ENCODE measurements at regions of chr9 and their contacts with region 1.

Region 1: DNA sequence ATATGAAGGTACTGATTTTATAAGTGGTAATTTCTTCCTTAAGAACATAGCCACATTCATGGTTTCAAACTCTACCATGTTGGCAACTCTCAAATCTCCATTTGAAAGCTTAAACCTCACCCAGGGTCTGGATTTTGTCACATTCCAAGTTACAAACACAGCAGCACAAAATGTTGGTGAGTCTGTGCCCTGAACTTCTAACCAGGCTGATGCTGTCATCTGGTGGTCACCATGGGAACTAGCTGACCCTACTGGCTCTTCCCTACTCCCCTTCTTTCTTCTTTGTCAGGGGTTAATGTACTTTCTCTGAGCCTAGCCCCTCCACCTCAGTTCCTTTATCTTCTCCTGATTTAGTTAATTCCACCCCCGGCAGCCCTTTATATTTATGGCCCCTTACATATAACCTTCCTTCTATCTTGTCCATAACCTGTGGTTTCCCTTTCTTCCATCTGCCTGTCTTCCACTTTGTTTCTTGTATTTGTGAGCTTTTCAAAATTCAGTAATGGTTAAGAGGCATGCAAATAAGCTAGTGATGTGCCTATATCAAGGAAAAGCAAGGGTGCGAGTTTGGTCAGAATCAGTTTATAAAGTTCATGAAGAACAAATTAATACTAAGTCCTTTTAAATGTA is 35.9 kb downstream of the TGFBR1 start:
- DNase-seq: peak; percentile 56
- ATAC-seq: peak; percentile 65
- H3K4me3 Mint-ChIP-seq: no peak overlapping the region
- H3K27ac Mint-ChIP-seq: peak overlapping the region; percentile 66
- H3K4me1 Mint-ChIP-seq: peaks cover 50% of the 10 kb centered on the region
- H3K27me3 Mint-ChIP-seq: no peaks in the 10 kb centered on the region

Region 2: DNA sequence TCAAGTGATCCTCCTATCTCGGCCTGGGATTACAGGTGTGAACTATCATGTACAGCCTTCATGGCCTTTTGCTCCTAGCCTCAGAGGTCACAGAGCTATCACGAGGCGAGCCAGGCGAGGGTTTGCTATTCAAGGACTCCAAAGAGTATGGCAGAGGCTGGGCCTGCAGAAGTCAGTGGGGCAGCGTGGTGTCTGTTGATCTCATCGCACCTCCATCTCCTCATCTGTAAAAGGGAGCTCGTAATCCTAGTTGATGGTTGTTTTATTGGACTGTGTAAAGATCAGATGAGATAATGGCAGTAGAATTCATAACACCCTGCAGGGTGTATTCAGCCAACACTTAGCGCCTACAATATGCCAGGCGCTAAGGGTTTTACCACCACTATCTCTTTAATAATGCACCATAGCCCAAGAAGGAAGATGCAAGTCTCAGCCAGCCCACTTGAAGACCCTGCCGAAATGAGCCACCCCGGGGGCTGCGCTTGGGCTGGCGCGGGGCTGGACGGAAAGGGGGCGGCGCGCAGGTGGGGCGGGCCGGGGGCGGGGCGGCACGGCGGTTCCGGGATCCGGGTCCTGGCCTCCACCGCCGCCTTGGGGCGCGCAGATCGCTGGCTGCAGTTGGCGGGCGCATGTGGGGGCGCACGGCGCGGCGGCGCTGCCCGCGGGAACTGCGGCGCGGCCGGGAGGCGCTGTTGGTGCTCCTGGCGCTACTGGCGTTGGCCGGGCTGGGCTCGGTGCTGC is 333.6 kb before region 1 on chr9 and contains the start of gene GALNT12:
- CTCF ChIA-PET with region 1: interaction called, 18 read pairs
- POLR2A ChIA-PET with region 1: no interaction called
- DNase-seq: peak; percentile 64
- ATAC-seq: peak; percentile 83
- H3K4me3 Mint-ChIP-seq: peak within 1 kb of the TSS; percentile 82
- H3K27ac Mint-ChIP-seq: peak within 1 kb of the TSS; percentile 9
- H3K4me1 Mint-ChIP-seq: peaks cover 35% of the 10 kb centered on the region
- H3K27me3 Mint-ChIP-seq: peaks cover 28% of the 10 kb centered on the region
- total RNA-seq, gene GALNT12: 7.9 to 8.8 TPM

Region 3: DNA sequence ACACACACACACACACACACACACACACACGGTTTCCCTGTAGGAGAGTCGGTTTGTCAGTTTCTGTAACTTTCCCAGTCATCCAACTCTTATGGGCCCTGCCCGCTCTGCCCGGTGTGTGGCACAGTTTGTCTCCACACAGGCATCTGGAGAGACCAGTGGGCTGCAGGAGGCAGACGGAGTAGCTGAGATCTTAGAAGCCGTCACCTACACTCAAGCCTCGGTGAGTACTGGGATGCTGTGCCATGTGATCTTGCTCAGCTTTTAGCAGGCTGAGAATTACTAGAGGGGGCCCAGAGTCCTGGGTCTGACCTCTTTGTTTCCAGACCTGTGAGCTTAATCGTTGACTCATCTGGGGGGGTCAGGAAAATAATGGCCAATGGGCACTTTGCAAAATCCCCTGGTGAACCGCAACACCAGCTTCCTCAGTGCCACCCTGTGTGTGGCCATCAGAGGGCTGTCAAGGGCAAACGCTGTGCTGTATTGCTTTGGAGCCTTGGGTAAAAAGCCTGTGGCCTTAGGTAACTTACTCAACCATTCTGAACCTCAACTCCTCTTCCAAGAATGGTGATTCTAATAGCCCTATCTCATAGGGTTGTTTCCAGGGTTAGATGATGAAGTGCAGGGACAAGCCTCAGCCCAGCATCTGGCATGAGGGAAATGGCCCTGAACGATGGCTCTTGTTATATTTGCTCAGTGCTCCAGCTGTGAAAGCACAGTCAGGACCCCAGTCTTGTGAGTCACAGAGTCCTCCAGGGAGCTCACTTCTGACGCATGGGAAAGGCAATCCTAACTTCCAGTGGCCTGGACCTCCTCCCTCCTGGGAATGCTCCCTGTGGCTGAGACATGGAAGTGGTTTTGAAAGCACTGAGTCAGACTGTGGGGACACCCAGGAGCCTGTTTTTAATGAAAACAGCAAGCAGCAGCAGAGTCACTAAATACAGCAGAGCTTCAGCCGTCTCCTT is 151.5 kb before region 1 on chr9:
- CTCF ChIA-PET with region 1: interaction called, 246 read pairs
- POLR2A ChIA-PET with region 1: interaction called, 3 read pairs
- DNase-seq: no peak
- ATAC-seq: no peak
- H3K4me3 Mint-ChIP-seq: no peak overlapping the region
- H3K27ac Mint-ChIP-seq: no peak overlapping the region
- H3K4me1 Mint-ChIP-seq: no peaks in the 10 kb centered on the region
- H3K27me3 Mint-ChIP-seq: no peaks in the 10 kb centered on the region

Region 4: GRCh38 chr9:99026338-99027298 is 114.2 kb before region 1 on chr9:
- CTCF ChIA-PET with region 1: interaction called, 13 read pairs
- POLR2A ChIA-PET with region 1: no interaction called
- DNase-seq: no peak
- ATAC-seq: no peak
- H3K4me3 Mint-ChIP-seq: no peak overlapping the region
- H3K27ac Mint-ChIP-seq: peak overlapping the region; percentile 5
- H3K4me1 Mint-ChIP-seq: peaks cover 45% of the 10 kb centered on the region
- H3K27me3 Mint-ChIP-seq: peaks cover 2% of the 10 kb centered on the region

Region 5: GRCh38 chr9:99104459-99105151 is 36.2 kb before region 1 on chr9 and contains the start of gene TGFBR1:
- CTCF ChIA-PET with region 1: interaction called, 125 read pairs
- POLR2A ChIA-PET with region 1: interaction called, 5 read pairs
- DNase-seq: peak; percentile 94
- ATAC-seq: peak; percentile 90
- H3K4me3 Mint-ChIP-seq: peak within 1 kb of the TSS; percentile 89
- H3K27ac Mint-ChIP-seq: peak within 1 kb of the TSS; percentile 92
- H3K4me1 Mint-ChIP-seq: peaks cover 76% of the 10 kb centered on the region
- H3K27me3 Mint-ChIP-seq: no peaks in the 10 kb centered on the region
- total RNA-seq, gene TGFBR1: 90.1 to 90.9 TPM

Region 6: GRCh38 chr9:99127376-99128132 is 13.2 kb before region 1 on chr9:
- CTCF ChIA-PET with region 1: interaction called, 30 read pairs
- POLR2A ChIA-PET with region 1: interaction called, 5 read pairs
- DNase-seq: no peak
- ATAC-seq: no peak
- H3K4me3 Mint-ChIP-seq: no peak overlapping the region
- H3K27ac Mint-ChIP-seq: peak overlapping the region; percentile 0
- H3K4me1 Mint-ChIP-seq: peaks cover 83% of the 10 kb centered on the region
- H3K27me3 Mint-ChIP-seq: no peaks in the 10 kb centered on the region

Region 7: DNA sequence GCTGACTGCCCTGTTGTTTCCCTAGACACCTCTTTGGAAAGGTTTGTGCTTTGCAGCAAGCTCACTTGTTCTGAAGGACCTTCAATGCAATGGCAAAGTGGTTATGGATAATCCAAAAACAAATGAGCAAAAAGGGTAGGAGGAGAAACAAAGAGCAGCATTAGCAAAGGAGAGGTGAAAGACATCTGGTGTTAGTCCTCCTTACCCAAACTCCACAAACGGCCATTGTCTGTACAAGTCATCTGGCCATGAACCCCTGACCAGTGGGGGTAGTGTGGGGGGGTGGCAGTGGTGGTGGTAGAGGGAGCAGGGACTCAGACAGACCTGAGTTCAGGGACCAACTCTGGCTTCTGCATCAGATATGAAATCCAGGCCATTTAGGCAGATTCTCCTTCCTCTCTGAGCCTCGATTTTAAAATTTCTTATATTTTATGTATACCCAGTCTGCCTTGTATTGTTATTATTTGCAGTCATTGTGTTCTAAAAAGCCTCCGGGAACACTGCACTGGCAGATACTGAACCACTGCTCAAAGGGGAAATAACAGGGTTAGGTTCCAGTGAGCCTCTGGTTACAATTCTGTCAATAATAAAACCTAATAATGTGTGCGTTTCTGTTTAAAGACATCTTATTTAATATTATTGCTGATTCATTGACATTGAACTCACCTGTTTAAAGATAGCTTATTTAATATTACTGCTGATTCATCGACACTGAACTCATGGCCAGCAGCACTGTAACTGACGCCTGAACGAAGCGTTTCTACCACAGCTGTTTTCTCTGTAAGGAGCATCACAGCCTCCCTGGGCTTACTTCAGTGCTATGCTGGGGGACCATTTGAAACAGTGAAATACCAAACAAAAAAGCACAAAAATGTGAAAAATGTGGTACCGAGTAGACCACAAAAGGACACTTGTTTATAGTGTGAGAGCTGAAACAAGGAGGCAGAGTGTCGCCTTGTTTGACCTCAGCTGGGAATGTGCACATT is 237.3 kb after region 1 on chr9:
- CTCF ChIA-PET with region 1: no interaction called
- POLR2A ChIA-PET with region 1: no interaction called
- DNase-seq: no peak
- ATAC-seq: no peak
- H3K4me3 Mint-ChIP-seq: no peak overlapping the region
- H3K27ac Mint-ChIP-seq: no peak overlapping the region
- H3K4me1 Mint-ChIP-seq: no peaks in the 10 kb centered on the region
- H3K27me3 Mint-ChIP-seq: peaks cover 35% of the 10 kb centered on the region

Region 8: DNA sequence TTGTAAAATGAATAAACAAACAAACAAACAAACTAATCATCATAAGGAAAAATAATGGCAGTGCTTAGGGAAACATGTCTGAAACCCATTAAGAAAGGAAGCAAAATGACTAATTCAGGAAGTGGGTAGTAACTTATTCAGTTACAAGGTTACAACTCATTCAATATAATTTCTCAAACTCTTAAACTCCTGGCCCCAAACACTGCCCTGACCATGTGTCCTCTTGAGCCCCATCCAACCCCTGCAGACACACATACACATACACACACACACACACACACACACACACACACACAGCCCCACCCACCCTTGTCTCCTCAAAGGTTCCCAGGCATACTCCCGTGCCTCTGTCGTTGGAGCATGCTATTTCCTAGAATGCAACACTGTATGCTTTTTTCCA is 275.2 kb after region 1 on chr9:
- CTCF ChIA-PET with region 1: no interaction called
- POLR2A ChIA-PET with region 1: no interaction called
- DNase-seq: no peak
- ATAC-seq: no peak
- H3K4me3 Mint-ChIP-seq: no peak overlapping the region
- H3K27ac Mint-ChIP-seq: peak overlapping the region; percentile 25
- H3K4me1 Mint-ChIP-seq: peaks cover 13% of the 10 kb centered on the region
- H3K27me3 Mint-ChIP-seq: peaks cover 11% of the 10 kb centered on the region